ENCODE measurements at regions of chr3 and their contacts with region 1.

Region 1: DNA sequence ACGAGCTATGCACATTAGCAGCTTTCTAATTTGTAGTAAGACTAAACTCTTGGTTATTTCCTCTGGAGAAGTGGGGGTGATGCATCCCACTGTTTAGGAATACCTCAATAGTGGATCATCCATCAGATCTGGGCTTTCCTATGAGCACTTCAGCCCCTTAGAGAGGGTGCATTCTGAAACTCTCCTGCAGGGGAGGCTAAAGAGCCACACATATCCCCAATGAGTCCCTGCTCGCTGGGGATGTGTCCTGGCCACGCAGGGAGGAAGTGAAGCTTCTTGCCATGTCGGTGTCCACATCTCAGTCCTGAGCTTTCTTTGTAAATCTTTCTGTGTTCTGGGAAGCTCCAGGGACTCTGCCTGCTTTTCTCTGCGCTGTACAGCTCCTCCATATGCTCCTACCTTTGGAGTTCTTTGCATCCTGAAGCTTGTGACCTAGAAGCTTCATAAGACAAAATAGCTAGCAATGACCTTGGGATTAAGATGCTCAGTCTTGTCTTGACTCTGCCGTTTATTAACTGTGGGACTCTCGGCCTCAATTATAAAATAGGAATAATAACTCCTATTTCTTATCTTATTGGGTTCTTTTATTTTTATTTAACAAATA is 28.3 kb upstream of the MASP1 start:
- DNase-seq: peak; percentile 77
- ATAC-seq: peak; percentile 88
- H3K4me3 ChIP-seq: peak overlapping the region; percentile 57; the same call in 1 of the 2 replicates
- H3K27ac ChIP-seq: no peak overlapping the region
- H3K4me1 ChIP-seq: peaks cover 4% of the 10 kb centered on the region; the same call in 1 of the 2 replicates
- H3K27me3 ChIP-seq: peaks cover 45% of the 10 kb centered on the region
- CTCF ChIP-seq: peak; percentile 83

Region 2: GRCh38 chr3:187112934-187113793 is 206.6 kb before region 1 on chr3:
- CTCF ChIA-PET with region 1: no interaction called
- POLR2A ChIA-PET with region 1: no interaction called
- intact Hi-C with region 1: loop called (anchors 10 kb)
- DNase-seq: peak; percentile 66
- ATAC-seq: 0 out of 2 replicates have a peak, but pooled peaks have one; percentile 20
- H3K4me3 ChIP-seq: no peak overlapping the region
- H3K27ac ChIP-seq: no peak overlapping the region
- H3K4me1 ChIP-seq: no peaks in the 10 kb centered on the region
- H3K27me3 ChIP-seq: no peaks in the 10 kb centered on the region
- CTCF ChIP-seq: peak; percentile 86

Region 3: DNA sequence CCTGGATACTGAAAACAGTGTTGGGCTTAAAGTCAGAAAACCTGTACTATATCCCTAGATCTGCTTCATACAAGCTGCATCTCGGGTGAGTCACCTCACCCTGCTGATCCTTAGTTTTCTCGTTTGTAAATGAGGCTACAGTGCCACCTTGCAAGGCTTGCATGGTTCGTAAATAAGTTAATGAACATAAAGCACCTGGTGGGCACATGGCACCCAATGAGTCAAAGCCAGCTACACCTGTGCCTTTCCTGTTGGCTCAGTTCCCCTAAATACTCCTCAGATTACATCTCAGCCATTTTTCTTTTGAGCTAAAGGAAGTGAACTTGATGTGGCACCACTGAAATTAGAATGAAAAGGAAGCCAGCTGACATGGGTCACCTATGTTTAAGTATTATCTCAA is 96.0 kb before region 1 on chr3:
- CTCF ChIA-PET with region 1: interaction called, 10 read pairs
- POLR2A ChIA-PET with region 1: no interaction called
- intact Hi-C with region 1: loop called (anchors 1 kb)
- DNase-seq: peak; percentile 71
- ATAC-seq: peak; percentile 33
- H3K4me3 ChIP-seq: no peak overlapping the region
- H3K27ac ChIP-seq: no peak overlapping the region
- H3K4me1 ChIP-seq: peaks cover 19% of the 10 kb centered on the region
- H3K27me3 ChIP-seq: no peaks in the 10 kb centered on the region
- CTCF ChIP-seq: no peak

Region 4: DNA sequence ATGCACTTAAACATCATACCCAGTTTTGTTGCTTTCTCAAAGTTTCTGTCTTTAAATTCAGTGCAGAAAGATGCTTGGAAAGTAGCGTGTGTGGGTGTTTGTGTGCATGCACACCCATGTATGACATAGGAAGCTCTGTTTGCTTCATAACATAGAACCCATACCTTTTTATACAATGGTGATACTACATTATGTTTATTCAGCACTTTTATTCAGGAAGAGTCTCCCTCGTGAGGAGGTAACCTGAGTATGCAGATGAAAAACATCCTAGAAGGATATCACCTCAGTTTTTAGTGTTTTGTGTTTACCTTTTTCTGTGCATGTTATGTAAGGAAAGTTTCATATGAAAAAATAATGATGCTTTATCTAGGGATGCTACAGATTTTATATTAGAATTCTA is 239.2 kb after region 1 on chr3:
- CTCF ChIA-PET with region 1: no interaction called
- POLR2A ChIA-PET with region 1: no interaction called
- intact Hi-C with region 1: loop called (anchors 5 kb)
- DNase-seq: no peak
- ATAC-seq: no peak
- H3K4me3 ChIP-seq: no peak overlapping the region
- H3K27ac ChIP-seq: no peak overlapping the region
- H3K4me1 ChIP-seq: no peaks in the 10 kb centered on the region
- H3K27me3 ChIP-seq: peaks cover 38% of the 10 kb centered on the region
- CTCF ChIP-seq: no peak

Region 5: DNA sequence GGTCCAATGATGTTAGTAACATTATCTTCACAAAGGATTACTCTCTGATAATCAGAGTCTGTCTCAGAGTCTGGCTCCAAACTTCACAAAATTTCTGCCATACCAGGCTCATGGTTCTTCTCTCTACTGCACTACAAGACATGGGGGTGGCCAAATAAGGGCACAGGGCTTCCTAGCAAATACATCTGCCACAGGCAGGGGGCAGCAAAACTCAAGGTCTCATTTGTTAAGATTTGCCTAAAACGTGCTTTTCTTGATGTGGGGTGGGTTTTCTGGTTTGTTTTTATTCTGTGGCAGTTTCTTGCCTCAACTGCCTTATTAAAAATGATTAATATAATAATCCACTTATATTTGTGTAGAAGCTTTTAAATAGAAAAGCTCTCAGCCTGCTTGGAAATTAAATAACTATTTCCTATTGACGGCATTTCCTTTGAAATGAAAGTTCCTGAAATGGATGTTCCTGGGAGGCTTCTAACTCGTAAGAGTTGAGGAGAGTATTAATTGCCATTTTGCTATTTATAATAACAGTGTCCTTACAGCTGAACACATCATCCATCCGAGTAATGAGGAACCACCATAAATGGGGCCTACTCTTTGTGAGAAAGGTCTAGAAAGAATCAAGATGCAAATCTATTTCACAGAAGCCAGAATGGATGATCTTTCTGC is 296.6 kb after region 1 on chr3:
- CTCF ChIA-PET with region 1: no interaction called
- POLR2A ChIA-PET with region 1: no interaction called
- intact Hi-C with region 1: loop called (anchors 1 kb)
- DNase-seq: peak; percentile 66
- ATAC-seq: peak; percentile 74
- H3K4me3 ChIP-seq: no peak overlapping the region
- H3K27ac ChIP-seq: no peak overlapping the region
- H3K4me1 ChIP-seq: no peaks in the 10 kb centered on the region
- H3K27me3 ChIP-seq: peaks cover 75% of the 10 kb centered on the region
- CTCF ChIP-seq: peak; percentile 87

Region 6: DNA sequence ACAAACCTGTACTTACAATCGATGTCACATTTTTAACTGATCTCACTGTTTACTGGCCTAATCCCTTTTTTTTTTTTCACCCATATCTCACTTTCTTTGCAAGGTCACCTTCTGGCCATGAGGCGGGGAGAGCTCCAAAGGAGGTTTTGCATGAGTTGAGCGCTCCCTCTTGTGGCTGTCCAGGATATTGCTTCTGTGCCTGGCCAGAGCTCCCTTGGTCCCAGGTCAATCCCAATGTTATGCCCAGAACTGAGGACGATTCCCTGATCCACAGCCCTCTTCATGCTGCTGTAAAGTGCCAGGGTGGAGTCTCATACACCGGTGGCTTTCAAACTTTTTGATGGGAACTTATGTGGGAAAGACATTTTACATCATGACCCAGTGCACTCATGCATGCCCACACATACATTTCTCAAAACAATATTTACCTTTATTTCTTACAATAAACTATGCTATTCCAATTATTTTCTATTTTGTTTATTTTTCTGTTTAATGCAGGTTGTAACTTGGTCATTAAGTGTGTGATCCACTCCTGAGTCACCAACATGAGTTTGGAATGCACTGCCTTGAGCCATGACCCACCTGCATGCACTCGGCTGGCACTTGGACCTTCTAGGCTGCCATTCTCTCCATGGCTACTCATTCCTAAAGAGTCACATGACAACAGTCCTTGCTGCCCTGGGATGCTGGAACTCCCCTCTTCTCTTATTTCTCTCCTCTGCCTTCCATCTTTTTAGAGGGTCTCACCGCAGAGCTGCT is 360.0 kb after region 1 on chr3:
- CTCF ChIA-PET with region 1: interaction called, 24 read pairs
- POLR2A ChIA-PET with region 1: no interaction called
- intact Hi-C with region 1: loop called (anchors 1 kb)
- DNase-seq: peak; percentile 87
- ATAC-seq: peak; percentile 87
- H3K4me3 ChIP-seq: no peak overlapping the region
- H3K27ac ChIP-seq: no peak overlapping the region
- H3K4me1 ChIP-seq: no peaks in the 10 kb centered on the region
- H3K27me3 ChIP-seq: peaks cover 41% of the 10 kb centered on the region
- CTCF ChIP-seq: peak; percentile 92

Region 7: DNA sequence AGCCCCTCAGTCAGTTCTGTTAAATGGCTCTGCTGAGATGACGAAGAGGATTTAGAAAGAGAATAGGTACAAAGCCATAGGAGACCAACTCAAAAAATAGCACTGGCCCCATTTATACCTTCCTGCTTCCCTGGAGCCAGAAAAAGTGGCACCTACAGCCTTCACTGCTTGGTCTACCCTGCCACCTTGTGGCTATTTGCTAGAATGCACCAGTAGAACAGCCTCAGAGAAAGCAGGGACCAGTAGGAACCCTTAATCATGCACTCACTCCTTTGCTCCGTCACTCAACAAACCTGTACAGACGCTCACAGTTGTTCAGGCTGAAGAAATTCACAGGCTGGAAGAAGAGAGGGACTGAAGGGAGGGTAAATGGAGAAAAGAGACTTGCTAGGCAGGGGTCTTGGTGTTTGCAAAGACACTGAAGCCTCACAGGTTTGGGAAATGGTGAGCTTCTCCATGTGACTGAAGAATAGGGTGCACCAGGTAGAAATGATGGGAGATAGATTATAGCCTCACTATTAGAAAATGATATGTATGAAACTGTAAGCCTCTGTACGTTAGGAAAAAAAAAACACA is 394.7 kb after region 1 on chr3:
- CTCF ChIA-PET with region 1: no interaction called
- POLR2A ChIA-PET with region 1: no interaction called
- intact Hi-C with region 1: loop called (anchors 1 kb)
- DNase-seq: peak; percentile 92
- ATAC-seq: peak; percentile 87
- H3K4me3 ChIP-seq: no peak overlapping the region
- H3K27ac ChIP-seq: no peak overlapping the region
- H3K4me1 ChIP-seq: peaks cover 7% of the 10 kb centered on the region; the same call in 1 of the 2 replicates
- H3K27me3 ChIP-seq: no peaks in the 10 kb centered on the region
- CTCF ChIP-seq: peak; percentile 97

Measured in PC-3 (cell line).